ENCODE measurements at regions of chr1 and their contacts with region 1.

Region 1: GRCh38 chr1:70205434-70206118 is at the start of gene LRRC40:
- DNase-seq: peak; percentile 90 to 96
- H3K4me3 ChIP-seq: peak within 1 kb of the TSS; percentile 85
- H3K27ac ChIP-seq: peak within 1 kb of the TSS; percentile 70
- H3K4me1 ChIP-seq: peaks cover 17% of the 10 kb centered on the region
- H3K27me3 ChIP-seq: no peaks in the 10 kb centered on the region
- CTCF ChIP-seq: no peak
- total RNA-seq, gene LRRC40: 10.6 and 12.0 TPM in 2 replicates

Region 2: GRCh38 chr1:69929308-69930057 is 276.1 kb before region 1 on chr1:
- CTCF ChIA-PET with region 1: no interaction called
- POLR2A ChIA-PET with region 1: no interaction called
- intact Hi-C with region 1: no loop called
- DNase-seq: peak in 1 of 2 experiments; percentile 3
- H3K4me3 ChIP-seq: no peak overlapping the region
- H3K27ac ChIP-seq: no peak overlapping the region
- H3K4me1 ChIP-seq: no peaks in the 10 kb centered on the region; the same call in 1 of the 2 replicates
- H3K27me3 ChIP-seq: no peaks in the 10 kb centered on the region
- CTCF ChIP-seq: no peak

Region 3: GRCh38 chr1:70034403-70034802 is 171.2 kb before region 1 on chr1:
- CTCF ChIA-PET with region 1: no interaction called
- POLR2A ChIA-PET with region 1: no interaction called
- intact Hi-C with region 1: loop called (anchors 10 kb)
- DNase-seq: peak in 1 of 2 experiments; percentile 43
- H3K4me3 ChIP-seq: no peak overlapping the region
- H3K27ac ChIP-seq: no peak overlapping the region
- H3K4me1 ChIP-seq: no peaks in the 10 kb centered on the region
- H3K27me3 ChIP-seq: no peaks in the 10 kb centered on the region
- CTCF ChIP-seq: no peak; the same call in 1 of the 2 replicates

Region 4: GRCh38 chr1:70169018-70169839 is 36.3 kb before region 1 on chr1:
- CTCF ChIA-PET with region 1: no interaction called
- POLR2A ChIA-PET with region 1: no interaction called
- intact Hi-C with region 1: no loop called
- DNase-seq: no peak
- H3K4me3 ChIP-seq: no peak overlapping the region
- H3K27ac ChIP-seq: no peak overlapping the region
- H3K4me1 ChIP-seq: no peaks in the 10 kb centered on the region
- H3K27me3 ChIP-seq: no peaks in the 10 kb centered on the region
- CTCF ChIP-seq: no peak

Region 5: DNA sequence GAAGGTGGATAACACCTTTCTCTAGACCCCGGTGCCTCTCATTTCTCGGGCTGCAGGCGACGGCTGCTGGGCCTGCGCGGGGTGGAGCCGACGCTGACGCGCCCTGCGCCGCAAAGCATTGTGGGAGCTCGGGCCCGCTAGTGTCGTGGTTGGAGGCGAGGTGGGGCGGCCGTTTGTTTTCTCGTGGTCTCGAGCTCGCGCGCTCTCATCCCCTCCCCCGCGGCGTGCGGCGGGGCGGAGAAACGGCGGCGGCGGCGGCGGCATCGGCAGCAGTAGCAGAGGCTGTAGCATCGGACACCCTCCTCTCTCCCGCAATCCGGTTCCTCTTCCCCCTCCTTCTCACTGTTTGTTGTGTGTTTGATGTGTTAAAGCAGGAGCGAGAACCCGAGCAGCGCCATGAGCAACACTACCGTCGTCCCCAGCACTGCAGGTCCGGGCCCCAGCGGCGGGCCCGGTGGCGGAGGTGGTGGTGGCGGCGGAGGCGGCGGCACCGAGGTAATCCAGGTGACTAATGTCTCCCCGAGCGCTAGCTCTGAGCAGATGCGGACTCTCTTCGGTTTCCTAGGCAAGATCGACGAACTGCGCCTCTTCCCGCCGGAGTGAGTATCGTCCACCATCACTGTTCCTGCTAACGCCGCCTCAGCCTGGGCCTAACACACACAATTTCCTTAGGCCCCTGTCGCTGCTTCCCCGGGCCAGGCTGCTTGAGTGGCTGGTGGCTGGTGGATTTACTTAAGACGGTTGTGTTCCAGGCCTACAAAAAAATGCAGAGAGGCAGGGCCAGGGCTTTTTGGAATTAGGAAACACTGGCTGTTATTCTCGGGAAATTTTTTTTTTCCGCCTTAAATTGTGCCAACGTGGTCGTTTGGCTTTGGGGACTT is 15.9 kb after region 1 on chr1 and contains the start of gene SRSF11:
- CTCF ChIA-PET with region 1: no interaction called
- POLR2A ChIA-PET with region 1: interaction called, 6 read pairs
- intact Hi-C with region 1: loop called (anchors 1 kb)
- DNase-seq: peak; percentile 82 to 97
- H3K4me3 ChIP-seq: peak within 1 kb of the TSS; percentile 66
- H3K27ac ChIP-seq: peak within 1 kb of the TSS; percentile 93
- H3K4me1 ChIP-seq: peaks cover 17% of the 10 kb centered on the region
- H3K27me3 ChIP-seq: no peaks in the 10 kb centered on the region
- CTCF ChIP-seq: no peak
- total RNA-seq, gene SRSF11: 153 and 199 TPM in 2 replicates

Region 6: DNA sequence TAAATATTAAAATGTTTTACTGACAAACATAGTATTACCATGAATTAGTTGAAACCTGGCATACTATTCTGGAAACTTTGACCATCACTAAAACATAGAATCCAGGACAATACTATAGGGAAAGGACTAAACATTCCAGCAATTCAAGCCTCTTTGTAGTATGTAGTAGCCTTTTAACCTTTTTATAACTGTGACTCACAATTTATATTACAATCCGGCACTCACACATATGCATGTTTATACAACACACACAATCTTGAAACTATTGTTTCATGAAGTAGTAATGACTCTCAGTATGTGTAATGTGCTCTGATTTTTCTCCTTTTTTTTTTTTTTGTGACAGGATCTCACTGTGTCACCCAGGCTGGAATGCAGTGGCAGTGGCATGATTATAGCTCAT is 84.6 kb after region 1 on chr1:
- CTCF ChIA-PET with region 1: interaction called, 14 read pairs
- POLR2A ChIA-PET with region 1: no interaction called
- intact Hi-C with region 1: no loop called
- DNase-seq: no peak
- H3K4me3 ChIP-seq: no peak overlapping the region
- H3K27ac ChIP-seq: no peak overlapping the region
- H3K4me1 ChIP-seq: no peaks in the 10 kb centered on the region
- H3K27me3 ChIP-seq: no peaks in the 10 kb centered on the region
- CTCF ChIP-seq: no peak

Region 7: DNA sequence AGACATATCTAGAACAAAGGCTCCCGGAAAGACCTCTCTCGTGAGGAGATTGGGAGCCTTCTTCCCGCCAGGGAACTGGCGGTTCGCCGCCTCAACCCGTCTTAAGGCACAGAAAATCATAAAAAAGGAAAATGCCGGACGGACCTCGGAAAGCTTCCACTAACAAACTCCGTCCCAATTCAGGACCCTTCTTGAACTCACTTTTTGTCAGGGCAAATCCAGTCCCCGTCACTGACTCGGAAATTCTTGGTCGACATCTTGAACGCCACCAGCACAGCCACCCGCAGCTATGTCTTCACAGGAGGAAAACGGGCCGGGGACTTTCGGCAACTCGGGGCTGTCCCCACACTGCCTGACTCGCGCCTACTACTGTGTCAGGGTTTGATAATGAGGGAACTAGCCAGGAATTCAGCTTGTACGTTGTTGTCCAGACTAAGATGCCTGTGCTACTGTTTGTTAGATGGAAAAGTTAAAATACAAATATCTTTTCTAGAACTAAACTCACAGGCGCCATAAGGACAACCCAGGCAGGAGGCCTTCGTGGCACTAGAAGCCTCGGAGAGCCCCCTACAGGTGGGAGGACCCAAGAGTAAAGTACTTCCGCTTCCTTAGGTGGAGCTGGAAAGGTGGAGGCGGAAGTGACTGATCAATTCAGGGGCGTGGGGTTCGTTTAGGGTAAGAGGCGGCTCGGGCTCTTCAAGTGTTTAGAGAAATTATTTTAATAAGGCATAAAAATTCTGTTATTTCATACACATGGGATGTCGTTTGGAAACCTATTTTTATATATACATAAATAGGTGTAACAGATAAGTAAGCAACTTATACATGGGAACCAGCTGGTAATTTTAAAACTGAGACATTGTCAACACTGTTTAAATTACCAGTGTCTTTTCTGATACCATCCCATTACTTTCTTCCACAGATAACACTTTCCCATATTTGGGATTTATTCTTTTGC is 875.4 kb after region 1 on chr1 and contains the start of gene ZRANB2:
- CTCF ChIA-PET with region 1: no interaction called
- POLR2A ChIA-PET with region 1: no interaction called
- intact Hi-C with region 1: loop called (anchors 2 kb)
- DNase-seq: peak; percentile 83 to 96
- H3K4me3 ChIP-seq: peak within 1 kb of the TSS; percentile 82
- H3K27ac ChIP-seq: peak within 1 kb of the TSS; percentile 83
- H3K4me1 ChIP-seq: peaks cover 21% of the 10 kb centered on the region
- H3K27me3 ChIP-seq: no peaks in the 10 kb centered on the region
- CTCF ChIP-seq: peak; percentile 79
- total RNA-seq, gene ZRANB2: 75.8 and 79.6 TPM in 2 replicates

Measured in PC-9 (cell line).